Activated B cell treated with CpG ODN at 0.5 μM for 24 hours (primary cell): ENCODE measurements at regions of chr20 and their contacts with region 1.

Region 1: GRCh38 chr20:19706463-19706862 is 51.6 kb upstream of the RIN2 start:
- DNase-seq: peak; percentile 34
- ATAC-seq: peak; percentile 96
- H3K4me3 Mint-ChIP-seq: no peak overlapping the region
- H3K27ac Mint-ChIP-seq: no peak overlapping the region
- H3K4me1 Mint-ChIP-seq: peaks cover 25% of the 10 kb centered on the region
- H3K27me3 Mint-ChIP-seq: no peaks in the 10 kb centered on the region
- CTCF ChIP-seq: no peak

Region 2: DNA sequence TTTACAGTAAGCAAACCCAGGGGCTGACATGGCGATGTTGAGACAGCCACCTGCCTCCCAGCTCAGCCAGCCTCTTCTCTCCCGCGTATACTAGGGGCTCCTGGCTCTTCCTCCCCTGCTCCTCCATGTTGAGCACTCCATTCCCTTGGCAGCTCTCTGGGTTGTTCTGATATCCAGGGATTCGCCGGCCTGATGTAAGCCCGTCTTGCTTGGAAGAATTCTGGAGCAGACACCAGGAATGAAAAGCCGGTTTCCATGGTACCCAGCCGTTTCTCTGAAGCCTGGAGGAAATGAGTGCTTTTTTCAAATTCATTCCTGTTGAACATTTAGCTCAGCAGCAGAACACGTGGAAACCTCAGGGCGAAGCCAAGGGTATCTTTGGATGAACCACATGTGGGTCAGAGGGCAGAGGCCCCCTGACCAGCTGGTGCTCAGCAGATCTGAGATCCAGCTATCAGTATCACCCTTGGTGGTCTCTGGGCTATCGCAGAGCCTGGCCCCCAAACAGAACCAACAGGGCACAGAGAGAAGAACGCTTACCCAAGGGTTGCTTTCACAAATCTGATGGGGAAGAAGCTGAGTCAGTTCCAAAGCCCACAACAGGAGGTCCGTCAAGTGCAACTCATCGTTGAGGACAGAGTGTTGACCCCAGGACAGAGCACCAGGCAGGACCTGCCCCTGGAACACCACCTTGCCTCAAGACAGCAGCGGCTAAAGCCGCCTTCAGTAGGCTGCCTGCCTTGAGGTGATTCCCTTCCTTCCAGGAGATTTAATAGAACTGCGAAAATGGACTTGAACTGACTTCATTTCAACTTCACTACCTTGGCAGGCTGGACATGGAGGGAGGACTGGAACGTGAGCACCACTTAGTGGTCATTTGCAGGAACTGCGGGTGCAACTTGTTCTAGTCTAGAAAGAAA is 44.5 kb before region 1 on chr20:
- CTCF ChIA-PET with region 1: interaction called, 3 read pairs
- POLR2A ChIA-PET with region 1: no interaction called
- intact Hi-C with region 1: loop called (anchors 1 kb)
- DNase-seq: peak; percentile 28
- ATAC-seq: peak; percentile 38
- H3K4me3 Mint-ChIP-seq: no peak overlapping the region
- H3K27ac Mint-ChIP-seq: no peak overlapping the region
- H3K4me1 Mint-ChIP-seq: peaks cover 32% of the 10 kb centered on the region
- H3K27me3 Mint-ChIP-seq: peaks cover 21% of the 10 kb centered on the region
- CTCF ChIP-seq: peak; percentile 99

Region 3: GRCh38 chr20:19725814-19726525 is 19.5 kb after region 1 on chr20:
- CTCF ChIA-PET with region 1: no interaction called
- POLR2A ChIA-PET with region 1: no interaction called
- intact Hi-C with region 1: loop called (anchors 2 kb)
- DNase-seq: no peak
- ATAC-seq: no peak
- H3K4me3 Mint-ChIP-seq: no peak overlapping the region
- H3K27ac Mint-ChIP-seq: no peak overlapping the region
- H3K4me1 Mint-ChIP-seq: peaks cover 37% of the 10 kb centered on the region
- H3K27me3 Mint-ChIP-seq: no peaks in the 10 kb centered on the region
- CTCF ChIP-seq: no peak

Region 4: GRCh38 chr20:19757487-19758132 is 51.1 kb after region 1 on chr20:
- CTCF ChIA-PET with region 1: no interaction called
- POLR2A ChIA-PET with region 1: no interaction called
- intact Hi-C with region 1: loop called (anchors 5 kb)
- DNase-seq: peak; percentile 21
- ATAC-seq: peak; percentile 49
- H3K4me3 Mint-ChIP-seq: peak overlapping the region; percentile 83
- H3K27ac Mint-ChIP-seq: no peak overlapping the region
- H3K4me1 Mint-ChIP-seq: peaks cover 13% of the 10 kb centered on the region
- H3K27me3 Mint-ChIP-seq: peaks cover 38% of the 10 kb centered on the region
- CTCF ChIP-seq: no peak

Region 5: GRCh38 chr20:19828232-19828631 is 121.8 kb after region 1 on chr20:
- CTCF ChIA-PET with region 1: interaction called, 4 read pairs
- POLR2A ChIA-PET with region 1: interaction called, 3 read pairs
- intact Hi-C with region 1: loop called (anchors 1 kb)
- DNase-seq: no peak
- ATAC-seq: peak; percentile 96
- H3K4me3 Mint-ChIP-seq: peak overlapping the region; percentile 6
- H3K27ac Mint-ChIP-seq: peak overlapping the region; percentile 56
- H3K4me1 Mint-ChIP-seq: peaks cover 58% of the 10 kb centered on the region
- H3K27me3 Mint-ChIP-seq: no peaks in the 10 kb centered on the region
- CTCF ChIP-seq: no peak

Region 6: DNA sequence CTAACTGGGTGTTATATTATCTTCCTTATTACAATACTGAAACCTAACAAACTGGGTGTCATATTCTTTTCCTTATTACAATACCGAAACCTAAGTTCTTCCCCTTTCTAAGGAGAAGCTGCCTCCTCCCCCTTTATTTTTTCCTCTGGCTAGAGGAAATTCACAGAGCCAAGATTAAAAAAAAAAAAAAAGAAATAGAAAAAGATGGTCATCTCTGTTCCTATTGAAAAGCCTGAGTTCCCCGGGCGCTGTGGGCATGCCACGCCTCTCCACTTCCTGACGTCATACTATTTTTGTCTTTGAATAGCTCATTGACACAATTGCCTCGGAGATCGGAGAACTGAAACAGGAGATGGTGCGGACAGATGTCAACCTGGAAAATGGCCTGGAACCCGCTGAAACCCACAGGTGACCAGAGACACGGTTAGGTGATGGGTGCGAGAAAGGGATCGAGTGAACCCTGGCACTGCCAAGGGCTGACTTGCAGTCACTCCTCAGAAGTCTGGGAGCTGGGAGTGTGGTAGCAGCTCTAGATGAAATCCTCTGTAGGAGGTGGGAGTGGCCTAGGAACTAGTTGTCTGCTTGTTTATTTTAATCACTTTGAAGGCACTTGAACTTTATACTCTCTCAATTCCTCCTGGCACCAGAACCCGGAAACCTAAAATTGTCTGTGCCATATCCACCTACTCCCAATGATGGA is 228.5 kb after region 1 on chr20:
- CTCF ChIA-PET with region 1: no interaction called
- POLR2A ChIA-PET with region 1: no interaction called
- intact Hi-C with region 1: loop called (anchors 5 kb)
- DNase-seq: peak; percentile 30
- ATAC-seq: peak; percentile 67
- H3K4me3 Mint-ChIP-seq: peak overlapping the region; percentile 72
- H3K27ac Mint-ChIP-seq: peak overlapping the region; percentile 71
- H3K4me1 Mint-ChIP-seq: peaks cover 48% of the 10 kb centered on the region
- H3K27me3 Mint-ChIP-seq: no peaks in the 10 kb centered on the region
- CTCF ChIP-seq: no peak

Region 7: DNA sequence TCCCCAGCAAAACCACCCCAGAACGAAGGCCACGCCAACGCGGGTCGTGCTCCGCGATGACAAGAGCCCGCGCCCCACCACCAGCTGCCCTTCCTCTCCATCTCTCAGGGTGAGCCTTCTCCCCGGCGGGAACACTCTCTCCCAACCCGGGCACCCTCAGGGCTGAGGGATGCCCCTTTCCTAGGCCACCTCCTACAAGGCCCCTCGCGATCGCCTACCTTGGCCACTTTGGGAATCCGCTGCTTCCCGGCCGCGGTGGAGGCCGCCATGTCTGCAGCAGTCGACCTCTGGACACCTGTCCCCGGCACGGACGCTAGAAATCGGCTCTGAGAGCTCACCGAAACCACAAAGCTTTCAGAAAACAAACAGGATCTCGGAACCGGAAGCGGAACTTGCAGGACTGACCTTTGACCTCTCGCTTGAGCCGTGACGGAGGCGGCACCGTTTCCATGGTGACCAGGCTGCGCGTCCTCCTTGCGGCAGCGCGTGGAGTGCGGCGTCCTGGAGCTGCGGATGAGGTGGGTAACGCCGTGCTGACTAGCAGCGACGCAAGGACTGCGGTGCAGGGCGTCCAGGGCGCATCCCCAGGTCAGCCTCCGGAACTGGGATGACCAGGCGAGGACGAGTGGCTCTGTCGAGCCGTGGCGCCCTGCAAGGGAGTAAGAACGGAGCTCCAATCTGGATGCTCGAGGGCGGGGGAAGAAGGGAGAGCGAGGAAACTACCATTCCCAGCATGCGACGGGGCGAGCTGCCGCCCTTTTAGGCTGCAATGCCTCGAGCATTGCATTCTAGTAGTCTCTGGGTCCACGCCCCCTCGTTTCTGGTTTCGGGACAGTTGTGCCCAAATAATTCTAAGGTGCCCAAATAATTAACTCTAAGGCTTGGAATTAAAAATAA is 345.9 kb after region 1 on chr20 and contains the starts of genes CFAP61 and CRNKL1:
- CTCF ChIA-PET with region 1: no interaction called
- POLR2A ChIA-PET with region 1: no interaction called
- intact Hi-C with region 1: loop called (anchors 1 kb)
- DNase-seq: peak; percentile 94
- ATAC-seq: peak; percentile 94
- H3K4me3 Mint-ChIP-seq: peak within 1 kb of the TSS; percentile 96
- H3K27ac Mint-ChIP-seq: peak within 1 kb of the TSS; percentile 93
- H3K4me1 Mint-ChIP-seq: peaks cover 26% of the 10 kb centered on the region
- H3K27me3 Mint-ChIP-seq: no peaks in the 10 kb centered on the region
- CTCF ChIP-seq: no peak
- total RNA-seq, gene CFAP61: not detected in 2 replicates
- total RNA-seq, gene CRNKL1: 21.3 and 22.3 TPM in 2 replicates